CD8-positive, alpha-beta T cell (primary cell): ENCODE measurements at regions of chr17 and their contacts with region 1.

Region 1: GRCh38 chr17:39636927-39637736 is at the start of gene STARD3:
- DNase-seq: peak; percentile 78 to 95 (median 92)
- ATAC-seq: peak; percentile 85
- H3K4me3 ChIP-seq: peak within 1 kb of the TSS; percentile 85 to 97
- H3K4me3 Mint-ChIP-seq: peak within 1 kb of the TSS; percentile 93
- H3K27ac ChIP-seq: peak within 1 kb of the TSS; percentile 86 to 94
- H3K27ac Mint-ChIP-seq: peak within 1 kb of the TSS; percentile 97
- H3K4me1 ChIP-seq: peaks cover 47% of the 10 kb centered on the region
- H3K4me1 Mint-ChIP-seq: peaks cover 64% of the 10 kb centered on the region
- H3K27me3 ChIP-seq: no peaks in the 10 kb centered on the region
- H3K27me3 Mint-ChIP-seq: no peaks in the 10 kb centered on the region
- CTCF ChIP-seq: no peak
- total RNA-seq, gene STARD3: 102 to 118 TPM

Region 2: DNA sequence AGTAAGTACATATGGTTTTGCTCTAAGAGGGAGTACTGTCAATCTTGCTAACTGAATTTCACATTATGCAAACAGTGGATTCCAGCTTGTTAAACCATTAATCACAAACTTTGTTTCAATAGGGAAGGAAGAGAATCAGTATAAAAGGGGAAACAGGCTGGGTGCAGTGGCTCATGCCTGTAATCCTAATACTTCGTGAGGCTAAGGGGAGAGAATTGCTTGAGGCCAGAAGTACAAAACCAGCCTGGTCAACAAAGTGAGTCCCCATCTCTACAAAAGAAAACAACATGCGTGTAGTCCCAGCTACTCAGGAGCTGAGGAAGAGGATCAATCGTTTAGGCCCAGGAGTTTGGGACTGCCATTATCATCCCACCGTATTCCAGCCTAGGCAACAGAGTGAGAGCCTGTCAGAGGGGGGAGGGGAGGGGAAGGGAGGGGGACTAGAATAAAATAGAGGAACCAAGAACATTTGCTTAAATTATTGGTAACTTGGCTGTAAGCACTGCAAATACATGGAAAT is 301.4 kb before region 1 on chr17:
- CTCF ChIA-PET with region 1: no interaction called
- POLR2A ChIA-PET with region 1: no interaction called
- intact Hi-C with region 1: no loop called
- DNase-seq: no peak
- ATAC-seq: no peak
- H3K4me3 ChIP-seq: no peak overlapping the region
- H3K4me3 Mint-ChIP-seq: no peak overlapping the region
- H3K27ac ChIP-seq: no peak overlapping the region
- H3K27ac Mint-ChIP-seq: no peak overlapping the region
- H3K4me1 ChIP-seq: no peaks in the 10 kb centered on the region
- H3K4me1 Mint-ChIP-seq: no peaks in the 10 kb centered on the region
- H3K27me3 ChIP-seq: no peaks in the 10 kb centered on the region
- H3K27me3 Mint-ChIP-seq: no peaks in the 10 kb centered on the region
- CTCF ChIP-seq: no peak

Region 3: GRCh38 chr17:39653662-39654331 is 16.7 kb after region 1 on chr17:
- CTCF ChIA-PET with region 1: interaction called, 91 read pairs
- POLR2A ChIA-PET with region 1: interaction called, 3 read pairs
- intact Hi-C with region 1: no loop called
- DNase-seq: peak; percentile 64 to 88 (median 81)
- ATAC-seq: peak; percentile 82
- H3K4me3 ChIP-seq: no peak overlapping the region
- H3K4me3 Mint-ChIP-seq: no peak overlapping the region
- H3K27ac ChIP-seq: no peak overlapping the region
- H3K27ac Mint-ChIP-seq: no peak overlapping the region
- H3K4me1 ChIP-seq: peaks cover 41% of the 10 kb centered on the region
- H3K4me1 Mint-ChIP-seq: peaks cover 60% of the 10 kb centered on the region
- H3K27me3 ChIP-seq: no peaks in the 10 kb centered on the region
- H3K27me3 Mint-ChIP-seq: no peaks in the 10 kb centered on the region
- CTCF ChIP-seq: peak; percentile 83

Region 4: DNA sequence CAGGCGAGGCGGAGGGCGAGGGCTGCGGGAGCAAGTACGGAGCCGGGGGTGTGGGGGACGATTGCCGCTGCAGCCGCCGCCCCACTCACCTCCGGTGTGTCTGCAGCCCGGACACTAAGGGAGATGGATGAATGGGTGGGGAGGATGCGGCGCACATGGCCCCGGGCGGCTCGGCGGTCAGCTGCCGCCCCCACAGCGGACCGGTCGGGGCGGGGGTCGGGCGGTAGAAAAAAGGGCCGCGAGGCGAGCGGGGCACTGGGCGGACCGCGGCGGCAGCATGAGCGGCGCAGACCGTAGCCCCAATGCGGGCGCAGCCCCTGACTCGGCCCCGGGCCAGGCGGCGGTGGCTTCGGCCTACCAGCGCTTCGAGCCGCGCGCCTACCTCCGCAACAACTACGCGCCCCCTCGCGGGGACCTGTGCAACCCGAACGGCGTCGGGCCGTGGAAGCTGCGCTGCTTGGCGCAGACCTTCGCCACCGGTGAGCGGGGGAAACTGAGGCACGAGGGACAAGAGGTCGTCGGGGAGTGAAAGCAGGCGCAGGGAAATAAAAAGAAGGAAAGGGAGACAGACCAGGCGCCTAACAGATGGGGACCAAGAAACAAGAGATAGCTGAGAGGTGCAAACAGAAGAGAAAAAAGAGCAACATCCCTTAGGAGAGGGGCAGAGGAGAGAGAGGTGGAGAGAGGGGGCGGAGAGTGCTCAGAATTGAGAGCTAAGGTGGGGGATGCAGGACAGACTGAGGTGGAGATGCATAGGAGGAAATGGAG is 31.3 kb after region 1 on chr17 and contains the start of gene PNMT:
- CTCF ChIA-PET with region 1: interaction called, 34 read pairs
- POLR2A ChIA-PET with region 1: interaction called, 3 read pairs
- intact Hi-C with region 1: no loop called
- DNase-seq: peak; percentile 37 to 84 (median 68)
- ATAC-seq: peak; percentile 79
- H3K4me3 ChIP-seq: peak within 1 kb of the TSS; percentile 29 to 50
- H3K4me3 Mint-ChIP-seq: peak within 1 kb of the TSS; percentile 79
- H3K27ac ChIP-seq: no peak within 1 kb of the TSS
- H3K27ac Mint-ChIP-seq: no peak within 1 kb of the TSS
- H3K4me1 ChIP-seq: peaks cover 26% of the 10 kb centered on the region
- H3K4me1 Mint-ChIP-seq: peaks cover 25% of the 10 kb centered on the region
- H3K27me3 ChIP-seq: peaks cover 0 to 2% of the 10 kb centered on the region in 2 experiments
- H3K27me3 Mint-ChIP-seq: peaks cover 12% of the 10 kb centered on the region
- CTCF ChIP-seq: peak; percentile 72
- total RNA-seq, gene PNMT: 0.43 TPM in 1 of 2 experiments, not detected in the other

Region 5: DNA sequence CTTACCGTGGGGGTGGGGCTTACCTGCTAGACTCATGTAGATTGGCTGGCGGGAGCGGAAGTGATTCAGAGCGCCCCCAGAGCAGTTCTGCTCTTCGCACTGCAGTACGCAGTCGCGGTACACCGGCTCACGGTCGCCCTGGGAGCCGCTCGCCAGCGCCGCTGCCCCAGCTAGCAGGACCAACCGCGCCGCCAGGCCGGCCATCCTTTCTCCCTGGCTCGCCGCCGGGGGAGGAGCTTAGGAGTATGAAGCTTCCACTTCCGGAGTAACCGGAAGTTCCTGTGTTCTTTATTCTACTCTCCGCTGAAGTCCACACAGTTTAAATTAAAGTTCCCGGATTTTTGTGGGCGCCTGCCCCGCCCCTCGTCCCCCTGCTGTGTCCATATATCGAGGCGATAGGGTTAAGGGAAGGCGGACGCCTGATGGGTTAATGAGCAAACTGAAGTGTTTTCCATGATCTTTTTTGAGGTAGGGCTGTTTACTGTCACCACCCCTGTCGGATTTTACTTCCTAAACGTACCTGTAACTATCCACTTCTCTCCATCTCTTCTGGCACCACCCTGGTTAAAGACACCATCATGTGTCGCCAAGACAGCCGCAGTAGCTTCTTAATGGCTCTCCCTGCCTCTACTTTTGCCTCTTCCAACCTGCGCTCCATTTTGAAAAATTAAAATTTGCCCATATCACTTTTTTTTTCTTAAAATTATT is 50.8 kb after region 1 on chr17 and contains the start of gene PGAP3:
- CTCF ChIA-PET with region 1: interaction called, 4 read pairs
- POLR2A ChIA-PET with region 1: interaction called, 4 read pairs
- intact Hi-C with region 1: loop called (anchors 1 kb)
- DNase-seq: peak; percentile 54 to 92 (median 85)
- ATAC-seq: peak; percentile 93
- H3K4me3 ChIP-seq: peak within 1 kb of the TSS; percentile 68 to 85
- H3K4me3 Mint-ChIP-seq: peak within 1 kb of the TSS; percentile 97
- H3K27ac ChIP-seq: peak within 1 kb of the TSS; percentile 80 to 86
- H3K27ac Mint-ChIP-seq: peak within 1 kb of the TSS; percentile 98
- H3K4me1 ChIP-seq: peaks cover 17% of the 10 kb centered on the region
- H3K4me1 Mint-ChIP-seq: peaks cover 27% of the 10 kb centered on the region
- H3K27me3 ChIP-seq: peaks cover 0 to 2% of the 10 kb centered on the region in 2 experiments
- H3K27me3 Mint-ChIP-seq: no peaks in the 10 kb centered on the region
- CTCF ChIP-seq: no peak
- total RNA-seq, gene PGAP3: 20.9 to 22.6 TPM

Region 6: DNA sequence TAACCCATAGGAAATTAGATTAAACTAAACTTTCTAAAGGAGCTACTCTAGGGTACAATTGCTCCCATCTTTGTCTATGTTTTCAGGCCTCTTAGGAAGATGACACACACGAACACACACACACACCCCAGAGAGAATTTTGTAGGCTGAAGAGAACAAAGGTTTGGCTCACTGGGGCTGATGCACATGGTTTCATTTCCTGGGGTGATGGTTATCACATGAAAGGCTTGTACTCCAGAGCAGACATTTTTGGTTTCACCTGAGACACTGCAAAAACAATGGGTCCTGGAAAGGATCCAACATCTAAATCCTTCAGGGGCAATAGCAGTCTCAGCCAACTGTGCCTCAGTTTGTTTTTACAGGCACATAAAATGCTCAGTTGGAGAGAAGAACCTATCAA is 163.4 kb after region 1 on chr17:
- CTCF ChIA-PET with region 1: no interaction called
- POLR2A ChIA-PET with region 1: no interaction called
- intact Hi-C with region 1: no loop called
- DNase-seq: peak; percentile 16 to 87 (median 61)
- ATAC-seq: peak; percentile 95
- H3K4me3 ChIP-seq: no peak overlapping the region
- H3K4me3 Mint-ChIP-seq: peak overlapping the region; percentile 26
- H3K27ac ChIP-seq: peak overlapping the region; percentile 19 to 49
- H3K27ac Mint-ChIP-seq: peak overlapping the region; percentile 94
- H3K4me1 ChIP-seq: peaks cover 59% of the 10 kb centered on the region
- H3K4me1 Mint-ChIP-seq: peaks cover 64% of the 10 kb centered on the region
- H3K27me3 ChIP-seq: no peaks in the 10 kb centered on the region
- H3K27me3 Mint-ChIP-seq: no peaks in the 10 kb centered on the region
- CTCF ChIP-seq: no peak

Region 7: DNA sequence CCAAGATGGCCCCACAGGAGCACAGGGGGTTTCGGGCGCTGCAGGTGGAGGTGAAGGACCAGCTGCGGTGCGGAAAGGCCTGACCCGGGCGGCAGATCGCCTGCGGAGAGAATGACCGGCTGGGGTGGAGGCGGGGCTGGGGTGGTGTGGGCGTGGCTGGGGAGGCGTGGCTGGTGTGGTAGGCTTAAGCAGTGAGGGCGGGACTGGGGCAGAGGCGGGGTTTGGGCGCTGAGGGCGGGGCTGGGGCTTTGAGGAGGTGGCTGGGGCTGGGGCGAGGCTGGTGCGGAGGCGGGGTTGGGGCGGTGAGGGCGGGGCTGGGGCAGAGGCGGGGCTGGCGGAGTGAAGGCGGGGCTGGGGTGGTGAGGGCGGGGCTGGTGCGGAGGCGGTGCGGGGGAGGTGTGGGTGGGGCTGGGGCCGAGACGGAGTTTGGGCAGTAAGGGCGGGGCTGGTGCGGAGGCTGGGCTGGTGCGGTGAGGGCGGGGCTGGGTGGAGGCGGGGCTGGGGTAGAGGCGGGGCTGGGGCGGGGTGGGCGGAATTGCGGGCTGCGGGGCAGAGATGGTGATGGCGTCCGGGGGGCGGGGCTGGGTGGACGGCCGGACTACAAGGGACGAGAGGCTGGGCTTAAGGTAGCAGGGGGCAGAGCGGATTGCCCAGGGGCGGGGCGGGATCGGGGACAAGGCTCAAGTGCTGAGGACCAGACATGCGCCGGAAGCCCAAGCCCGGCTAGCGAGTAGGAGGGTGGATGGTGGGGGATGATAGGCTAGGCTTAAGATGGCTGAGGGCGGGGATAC is 315.7 kb after region 1 on chr17:
- CTCF ChIA-PET with region 1: no interaction called
- POLR2A ChIA-PET with region 1: no interaction called
- intact Hi-C with region 1: loop called (anchors 10 kb)
- DNase-seq: peak; percentile 92 to 97 (median 95)
- ATAC-seq: peak; percentile 87
- H3K4me3 ChIP-seq: peak overlapping the region; percentile 66 to 80
- H3K4me3 Mint-ChIP-seq: peak overlapping the region; percentile 86
- H3K27ac ChIP-seq: peak overlapping the region; percentile 51 to 74
- H3K27ac Mint-ChIP-seq: peak overlapping the region; percentile 89
- H3K4me1 ChIP-seq: peaks cover 26% of the 10 kb centered on the region
- H3K4me1 Mint-ChIP-seq: peaks cover 22% of the 10 kb centered on the region
- H3K27me3 ChIP-seq: no peaks in the 10 kb centered on the region
- H3K27me3 Mint-ChIP-seq: no peaks in the 10 kb centered on the region
- CTCF ChIP-seq: no peak

Region 8: GRCh38 chr17:40219073-40219860 is 582.1 kb after region 1 on chr17 and contains the start of gene WIPF2:
- CTCF ChIA-PET with region 1: no interaction called
- POLR2A ChIA-PET with region 1: no interaction called
- intact Hi-C with region 1: loop called in 1 of 2 experiments (anchors 5 kb)
- DNase-seq: peak; percentile 92 to 98 (median 96)
- ATAC-seq: peak; percentile 90
- H3K4me3 ChIP-seq: peak within 1 kb of the TSS; percentile 83 to 87
- H3K4me3 Mint-ChIP-seq: peak within 1 kb of the TSS; percentile 95
- H3K27ac ChIP-seq: peak within 1 kb of the TSS; percentile 99
- H3K27ac Mint-ChIP-seq: peak within 1 kb of the TSS; percentile 100
- H3K4me1 ChIP-seq: peaks cover 8% of the 10 kb centered on the region
- H3K4me1 Mint-ChIP-seq: peaks cover 30% of the 10 kb centered on the region
- H3K27me3 ChIP-seq: no peaks in the 10 kb centered on the region
- H3K27me3 Mint-ChIP-seq: no peaks in the 10 kb centered on the region
- CTCF ChIP-seq: peak; percentile 53
- total RNA-seq, gene WIPF2: 26.8 to 30.8 TPM